Left cardiac atrium (tissue), 4 donors: ENCODE measurements at regions of chr13 and their contacts with region 1.

Region 1: DNA sequence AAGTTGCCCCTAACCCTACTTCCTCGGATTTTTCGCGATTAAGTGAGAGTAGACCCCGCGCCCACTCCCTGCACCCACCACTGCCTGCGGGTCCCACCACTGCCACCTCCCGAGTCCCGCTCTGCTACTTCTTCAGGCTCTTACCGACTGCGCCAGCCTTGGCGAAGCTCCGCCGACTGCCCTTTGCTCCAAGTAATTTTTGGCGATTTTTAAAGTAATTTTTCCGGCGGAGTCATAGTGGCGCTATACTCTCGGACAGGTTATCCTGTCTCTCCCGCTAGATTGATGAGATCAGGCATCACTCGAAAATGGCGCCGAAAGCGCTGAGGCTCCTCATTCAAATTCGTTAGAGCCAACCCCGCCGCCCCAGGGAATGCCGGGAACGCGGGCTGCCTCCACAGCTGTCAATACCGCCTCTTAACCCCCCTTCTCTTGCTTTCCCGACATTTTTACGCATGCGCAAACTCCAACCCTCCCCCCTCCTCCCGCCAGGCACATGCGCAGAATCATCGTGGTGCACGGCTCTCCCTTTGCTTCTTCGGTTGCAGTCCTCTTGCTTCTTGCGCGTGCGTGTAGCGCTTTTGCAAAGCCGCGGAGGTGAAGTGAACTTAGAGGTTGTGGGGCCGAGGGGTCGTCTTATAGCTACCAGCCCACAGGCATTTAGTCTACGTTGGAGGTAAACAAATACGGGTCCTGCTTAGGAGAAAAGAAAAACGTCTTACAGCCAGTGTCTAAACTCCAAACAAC is 66.6 kb downstream of the KCNRG start:
- DNase-seq: peak; percentile 97
- ATAC-seq: peak; percentile 96

Region 2: DNA sequence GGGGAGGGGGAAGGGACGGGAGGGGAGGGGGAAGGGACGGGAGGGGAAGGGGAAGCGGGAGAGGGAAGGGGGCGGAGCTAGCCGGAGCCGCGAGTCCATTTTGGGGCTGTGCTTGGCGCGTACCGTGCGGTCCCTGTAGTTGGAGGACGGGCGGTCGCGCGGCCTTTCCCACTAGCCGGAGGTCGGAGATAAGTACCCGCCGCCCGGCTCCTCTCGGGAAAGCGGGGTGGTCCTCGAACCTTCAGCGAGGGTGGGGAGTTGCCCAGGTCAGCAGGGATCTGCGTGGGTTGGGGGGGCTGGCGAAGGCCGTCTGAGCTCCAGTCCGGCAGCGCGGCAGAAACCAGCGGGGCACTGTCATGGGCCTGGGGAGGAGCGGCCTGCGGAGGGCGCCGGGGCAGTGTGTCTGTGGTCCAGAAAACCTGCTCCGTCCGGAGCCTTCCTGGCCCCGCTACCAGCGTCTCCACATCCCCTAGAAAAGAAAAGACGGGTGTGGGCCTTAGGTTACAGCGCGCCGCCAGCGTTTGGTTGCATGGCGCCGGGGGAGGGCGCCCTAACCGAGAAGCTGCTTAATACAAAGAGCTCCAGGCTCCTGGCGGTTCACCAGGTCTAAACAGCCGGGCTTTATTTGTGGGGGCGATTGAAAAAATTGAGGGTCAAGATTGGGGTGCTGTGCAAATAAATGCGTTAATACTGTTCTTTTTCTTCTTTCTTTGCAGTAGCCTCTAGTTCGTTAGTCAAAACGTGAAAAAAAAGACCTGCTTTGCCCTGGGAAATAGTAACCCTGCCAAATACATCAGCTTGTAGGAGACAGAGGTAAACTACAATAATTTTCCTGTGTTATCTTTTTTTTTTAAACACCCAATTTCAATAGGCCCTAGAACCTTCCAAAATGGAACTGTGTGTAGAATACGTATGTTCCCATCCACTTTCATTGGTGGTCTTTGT is 84.6 kb before region 1 on chr13 and contains the start of gene TRIM13:
- intact Hi-C with region 1: loop called (anchors 5 kb)
- DNase-seq: peak; percentile 94
- ATAC-seq: peak; percentile 88 to 89
- total RNA-seq, gene TRIM13: 19.5 to 19.6 TPM

Region 3: GRCh38 chr13:50123862-50124536 is 42.1 kb after region 1 on chr13:
- intact Hi-C with region 1: loop called in 1 of 2 experiments (anchors 2 kb)
- DNase-seq: peak; percentile 79
- ATAC-seq: peak; percentile 89 to 93

Region 4: GRCh38 chr13:50529154-50529882 is 447.5 kb after region 1 on chr13:
- intact Hi-C with region 1: loop called in 1 of 2 experiments (anchors 5 kb)
- DNase-seq: peak; percentile 90
- ATAC-seq: peak; percentile 92 to 96

Region 5: DNA sequence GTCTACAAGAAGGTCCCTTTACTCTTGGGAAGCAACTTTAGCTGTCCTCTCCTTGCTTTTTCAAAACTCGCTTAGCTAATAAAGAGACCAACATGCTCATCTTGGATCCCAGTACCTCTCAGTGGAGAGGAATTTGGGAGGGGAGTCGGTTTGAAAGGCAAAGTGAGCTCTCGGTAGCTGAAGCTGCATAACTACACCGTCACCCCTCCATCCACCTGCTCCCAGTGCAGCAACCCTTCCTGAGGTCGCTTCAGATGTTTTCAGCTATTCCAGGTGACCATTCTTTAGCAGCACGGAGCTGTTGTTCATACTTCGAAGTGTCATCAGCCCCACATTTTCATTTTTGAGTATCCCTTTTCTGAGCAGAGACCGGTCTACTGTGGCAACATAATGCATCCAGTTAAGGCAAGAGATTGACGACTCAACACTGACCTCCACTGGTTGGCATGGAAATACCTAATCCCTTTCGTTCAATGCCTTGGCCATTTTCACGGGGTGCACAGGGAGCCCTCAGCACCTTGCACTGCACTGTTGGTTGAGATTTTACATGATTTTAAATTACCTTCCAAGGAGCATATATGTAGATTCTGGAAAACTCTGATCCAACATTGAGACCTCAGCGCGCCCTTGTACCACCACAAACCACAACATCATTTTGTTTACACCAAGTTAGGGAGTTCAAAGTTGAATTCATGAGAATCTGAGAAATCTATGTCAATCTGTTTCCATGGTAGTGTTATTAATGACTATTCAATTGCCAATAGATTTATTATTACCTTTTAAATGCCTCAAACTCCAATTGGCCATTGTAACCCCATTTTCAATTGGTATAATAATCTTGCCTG is 719.5 kb after region 1 on chr13:
- intact Hi-C with region 1: loop called in 1 of 2 experiments (anchors 10 kb)
- DNase-seq: peak; percentile 35
- ATAC-seq: peak; percentile 93 to 94

Region 6: DNA sequence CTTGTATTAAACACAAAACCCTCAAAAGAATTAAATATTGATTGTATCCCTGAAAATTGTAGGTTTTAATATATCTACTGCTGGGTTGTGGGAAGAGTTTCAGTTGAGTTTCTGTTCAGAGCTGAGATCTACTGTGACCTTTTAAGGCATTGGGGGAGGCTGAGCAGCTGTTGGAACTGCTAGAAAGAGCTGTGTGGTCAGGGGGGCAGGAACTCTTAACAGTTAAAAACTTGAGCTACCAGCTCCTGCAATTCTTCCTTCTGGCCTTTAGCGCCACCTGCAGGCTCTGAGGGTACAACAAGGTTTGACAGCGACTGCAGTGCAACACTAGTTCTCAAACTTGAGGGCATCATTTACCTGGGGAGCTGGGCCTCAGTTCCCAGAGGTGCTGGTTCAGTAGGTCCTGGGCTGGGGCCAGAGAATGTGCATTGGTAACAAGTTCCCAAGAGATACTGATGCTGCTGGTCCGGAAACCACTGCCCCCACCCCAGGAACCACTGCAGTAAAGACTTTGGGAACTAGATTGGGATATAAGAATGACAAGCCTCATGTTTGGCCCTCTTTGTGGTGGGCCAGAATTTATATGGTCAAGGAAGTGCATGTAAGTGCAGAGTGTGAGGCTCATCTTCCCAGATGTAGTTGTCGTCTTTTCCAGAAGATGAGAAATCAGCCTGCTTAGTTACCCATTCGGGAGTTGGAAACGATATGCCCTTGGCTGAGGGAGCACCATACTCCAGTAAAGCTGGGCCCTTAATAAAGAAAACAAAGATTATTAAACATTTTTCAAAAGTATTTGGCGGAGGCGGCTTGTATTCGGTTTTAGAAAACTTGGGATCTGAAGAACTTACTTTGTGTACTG is 830.3 kb after region 1 on chr13:
- intact Hi-C with region 1: loop called in 1 of 2 experiments (anchors 5 kb)
- DNase-seq: peak; percentile 89
- ATAC-seq: peak in 1 of 2 donors; percentile 13